Activated B cell treated with CpG ODN at 0.5 μM for 24 hours (primary cell): ENCODE measurements at regions of chr16 and their contacts with region 1.

Region 1: GRCh38 chr16:68737046-68737729 is at the start of gene CDH1:
- DNase-seq: peak; percentile 26
- ATAC-seq: peak; percentile 29
- H3K4me3 Mint-ChIP-seq: peak within 1 kb of the TSS; percentile 59
- H3K27ac Mint-ChIP-seq: no peak within 1 kb of the TSS
- H3K4me1 Mint-ChIP-seq: peaks cover 28% of the 10 kb centered on the region
- H3K27me3 Mint-ChIP-seq: peaks cover 30% of the 10 kb centered on the region
- CTCF ChIP-seq: no peak
- total RNA-seq, gene CDH1: 8.2 and 10.7 TPM in 2 replicates

Region 2: DNA sequence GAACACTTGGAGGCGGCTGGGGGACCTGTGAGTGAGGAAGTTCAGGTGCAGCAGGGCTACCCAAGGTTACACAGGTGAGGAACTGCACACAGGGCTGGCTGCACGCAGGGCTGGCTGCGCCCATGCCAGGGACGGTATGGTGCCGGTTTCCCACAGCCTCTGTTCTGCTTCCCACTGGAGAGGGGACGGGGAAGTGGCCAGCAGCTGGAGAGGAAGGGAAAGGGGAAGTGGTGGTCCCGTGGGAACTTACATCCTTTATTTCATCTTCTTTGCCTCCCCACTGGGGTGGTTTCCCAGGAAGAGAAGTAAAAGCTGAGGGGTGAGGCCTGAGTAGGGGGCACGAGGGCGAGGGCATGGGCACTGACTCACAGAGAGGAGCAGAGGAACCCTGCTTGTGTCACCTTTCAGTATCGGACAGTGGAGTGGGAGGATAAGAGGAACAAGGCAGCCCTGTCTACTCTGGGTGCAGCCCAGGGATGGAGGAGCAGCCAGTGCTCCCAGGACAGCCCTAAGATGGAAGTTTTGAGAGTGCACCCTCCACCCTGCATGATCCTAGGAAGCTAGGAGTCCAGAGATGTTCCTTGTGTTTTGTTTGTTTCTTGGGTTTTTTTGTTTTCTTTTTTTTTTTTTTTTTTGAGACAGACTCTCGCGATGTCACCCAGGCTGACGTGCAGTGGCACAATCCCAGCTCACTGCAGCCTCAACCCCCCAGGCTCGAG is 25.6 kb before region 1 on chr16:
- CTCF ChIA-PET with region 1: no interaction called
- POLR2A ChIA-PET with region 1: interaction called, 10 read pairs
- intact Hi-C with region 1: no loop called
- DNase-seq: no peak
- ATAC-seq: peak; percentile 78
- H3K4me3 Mint-ChIP-seq: peak overlapping the region; percentile 38
- H3K27ac Mint-ChIP-seq: peak overlapping the region; percentile 30
- H3K4me1 Mint-ChIP-seq: peaks cover 17% of the 10 kb centered on the region
- H3K27me3 Mint-ChIP-seq: peaks cover 12% of the 10 kb centered on the region
- CTCF ChIP-seq: no peak

Region 3: DNA sequence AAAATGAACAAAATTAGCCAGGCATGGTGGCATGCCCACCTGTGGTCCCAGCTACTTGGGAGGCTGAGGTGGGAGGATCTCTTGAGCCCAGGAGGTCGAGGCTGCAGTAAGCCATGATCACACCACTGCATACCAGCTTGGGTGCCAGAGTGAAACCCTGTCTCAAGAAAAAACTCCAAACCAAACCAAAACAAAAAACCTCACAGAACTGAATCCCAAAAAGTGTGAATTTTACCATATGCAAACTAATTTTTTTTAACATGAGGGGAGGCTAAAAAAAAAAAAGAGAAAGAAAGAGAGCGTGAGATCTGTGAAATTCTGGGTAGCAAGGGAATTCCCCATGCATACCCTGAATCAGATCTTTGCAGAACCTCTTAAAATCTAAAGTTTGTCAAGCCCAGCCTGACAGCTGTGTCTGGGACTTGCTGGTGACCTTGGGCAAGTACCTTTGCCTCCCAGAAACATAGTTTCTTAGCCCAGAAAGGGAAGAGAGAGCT is 17.1 kb before region 1 on chr16:
- CTCF ChIA-PET with region 1: no interaction called
- POLR2A ChIA-PET with region 1: interaction called, 7 read pairs
- intact Hi-C with region 1: loop called (anchors 1 kb)
- DNase-seq: no peak
- ATAC-seq: peak; percentile 92
- H3K4me3 Mint-ChIP-seq: peak overlapping the region; percentile 41
- H3K27ac Mint-ChIP-seq: peak overlapping the region; percentile 85
- H3K4me1 Mint-ChIP-seq: peaks cover 21% of the 10 kb centered on the region
- H3K27me3 Mint-ChIP-seq: no peaks in the 10 kb centered on the region
- CTCF ChIP-seq: no peak